ENCODE measurements at regions of chr20 and their contacts with region 1.

Region 1: DNA sequence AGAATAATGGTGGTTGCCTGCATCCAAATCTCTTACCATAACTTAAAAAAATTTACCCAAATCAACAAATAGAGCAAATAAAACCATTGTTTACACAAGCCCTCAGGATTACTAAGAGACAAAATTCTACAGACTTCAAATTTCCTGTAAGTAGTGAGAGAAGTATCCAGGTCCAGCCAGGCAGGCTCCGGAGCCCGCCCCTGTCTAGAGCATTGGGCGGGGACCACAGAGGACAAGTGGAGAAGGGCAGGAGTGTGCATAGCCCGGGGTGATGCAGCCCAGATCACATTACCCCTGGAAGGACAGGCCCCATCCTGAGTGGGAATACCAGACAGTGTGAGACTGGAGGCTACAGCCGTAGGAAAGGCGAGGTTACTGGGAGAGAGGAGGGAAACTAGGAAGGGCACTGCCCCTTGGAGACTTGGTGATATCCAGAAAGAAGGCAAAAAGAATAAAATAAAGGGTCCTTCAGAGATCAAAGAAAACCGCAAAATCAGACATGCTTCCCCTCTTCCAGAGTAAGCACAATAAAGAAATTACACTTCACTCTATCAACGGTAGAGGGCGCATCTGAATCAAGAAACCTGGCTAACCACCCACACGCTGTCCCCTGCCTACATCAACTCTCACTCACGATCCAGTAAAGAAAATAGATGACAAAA is 26.6 kb downstream of the RIN2 start:
- DNase-seq: no peak
- ATAC-seq: peak; percentile 78

Region 2: DNA sequence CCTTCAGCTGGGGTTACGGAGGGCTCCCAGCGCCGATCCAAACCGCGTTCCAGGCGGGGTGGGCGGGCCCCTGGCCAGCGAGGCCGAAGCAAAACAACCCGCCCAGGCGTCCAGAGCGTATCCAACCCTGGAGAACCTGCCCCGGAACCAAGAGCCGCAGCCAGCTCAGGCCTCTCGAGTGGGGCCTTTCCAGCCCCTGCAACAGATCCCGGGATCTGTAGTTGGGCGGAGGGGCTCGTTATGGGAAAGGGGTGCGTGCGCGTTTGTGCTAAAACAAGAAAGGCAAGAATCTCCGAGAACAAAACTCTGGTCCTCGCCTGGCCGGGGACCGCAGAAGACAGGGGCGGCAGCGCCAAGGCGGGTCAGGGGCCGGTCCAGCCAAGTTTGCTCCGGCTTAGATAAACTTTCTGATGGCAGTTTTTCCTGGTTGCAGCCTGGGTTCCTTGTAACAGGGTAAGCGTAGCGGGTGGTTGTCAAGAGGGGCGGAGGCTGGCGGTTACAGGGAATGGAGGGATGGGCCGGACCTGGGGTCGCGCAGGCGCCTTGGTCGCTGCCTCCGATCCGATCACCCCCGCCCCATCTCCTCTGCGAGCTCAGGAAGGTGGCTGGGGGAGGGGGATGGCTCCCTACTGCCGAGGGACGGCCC is 27.0 kb before region 1 on chr20:
- intact Hi-C with region 1: loop called (anchors 1 kb)
- DNase-seq: peak; percentile 94
- ATAC-seq: peak; percentile 87

Region 3: GRCh38 chr20:19830211-19830785 is 45.7 kb after region 1 on chr20:
- intact Hi-C with region 1: loop called (anchors 5 kb)
- DNase-seq: no peak
- ATAC-seq: no peak

Region 4: GRCh38 chr20:19995220-19995863 is 210.7 kb after region 1 on chr20:
- intact Hi-C with region 1: loop called (anchors 2 kb)
- DNase-seq: no peak
- ATAC-seq: no peak

Measured in Right ventricle myocardium inferior (tissue), 1 donor.